WTC11 (cell line): ENCODE measurements at regions of chr13 and their contacts with region 1.

Region 1: GRCh38 chr13:29508130-29508875 is 87.2 kb downstream of the SLC7A1 start:
- DNase-seq: peak; percentile 90
- ATAC-seq: peak; percentile 80
- H3K4me3 Mint-ChIP-seq: no peak overlapping the region
- H3K27ac Mint-ChIP-seq: no peak overlapping the region
- H3K4me1 Mint-ChIP-seq: peaks cover 8% of the 10 kb centered on the region; the same call in 1 of the 2 replicates
- H3K27me3 Mint-ChIP-seq: no peaks in the 10 kb centered on the region
- CTCF ChIP-seq: peak; percentile 88

Region 2: GRCh38 chr13:29472332-29472961 is 35.9 kb before region 1 on chr13:
- CTCF ChIA-PET with region 1: interaction called, 10 read pairs
- POLR2A ChIA-PET with region 1: no interaction called
- DNase-seq: peak; percentile 68
- ATAC-seq: peak; percentile 76
- H3K4me3 Mint-ChIP-seq: no peak overlapping the region
- H3K27ac Mint-ChIP-seq: no peak overlapping the region
- H3K4me1 Mint-ChIP-seq: no peaks in the 10 kb centered on the region
- H3K27me3 Mint-ChIP-seq: no peaks in the 10 kb centered on the region; the same call in 1 of the 2 replicates
- CTCF ChIP-seq: peak; percentile 81

Region 3: GRCh38 chr13:29496240-29496712 is 12.0 kb before region 1 on chr13:
- CTCF ChIA-PET with region 1: interaction called, 31 read pairs
- POLR2A ChIA-PET with region 1: no interaction called
- DNase-seq: no peak
- ATAC-seq: no peak
- H3K4me3 Mint-ChIP-seq: no peak overlapping the region
- H3K27ac Mint-ChIP-seq: no peak overlapping the region
- H3K4me1 Mint-ChIP-seq: peaks cover 8% of the 10 kb centered on the region
- H3K27me3 Mint-ChIP-seq: no peaks in the 10 kb centered on the region
- CTCF ChIP-seq: no peak

Region 4: GRCh38 chr13:29548722-29549121 is 40.4 kb after region 1 on chr13:
- CTCF ChIA-PET with region 1: interaction called, 13 read pairs
- POLR2A ChIA-PET with region 1: no interaction called
- DNase-seq: no peak
- ATAC-seq: no peak
- H3K4me3 Mint-ChIP-seq: no peak overlapping the region
- H3K27ac Mint-ChIP-seq: peak overlapping the region; percentile 43; the same call in 1 of the 2 replicates
- H3K4me1 Mint-ChIP-seq: peaks cover 38% of the 10 kb centered on the region
- H3K27me3 Mint-ChIP-seq: no peaks in the 10 kb centered on the region
- CTCF ChIP-seq: no peak

Region 5: DNA sequence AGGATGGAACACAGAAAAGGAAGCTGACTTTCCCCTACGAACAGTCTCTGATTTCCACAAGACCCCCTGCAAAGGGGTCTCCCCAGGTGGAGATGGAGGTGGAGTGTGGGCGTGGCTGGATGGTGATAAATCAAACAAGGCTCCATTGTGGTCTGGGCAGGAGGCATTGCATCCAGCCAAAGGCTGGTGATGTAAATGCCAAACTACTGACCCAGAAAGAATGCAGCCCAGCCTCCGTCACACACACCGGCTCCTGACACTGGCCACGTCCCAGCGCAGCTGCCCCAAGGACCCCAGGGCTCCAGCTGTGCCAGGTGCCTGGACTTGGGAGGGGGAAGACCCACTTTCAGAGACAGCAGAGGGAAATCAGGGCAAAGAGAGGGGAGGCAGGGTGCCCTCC is 80.9 kb after region 1 on chr13:
- CTCF ChIA-PET with region 1: interaction called, 15 read pairs
- POLR2A ChIA-PET with region 1: no interaction called
- DNase-seq: no peak
- ATAC-seq: no peak
- H3K4me3 Mint-ChIP-seq: no peak overlapping the region
- H3K27ac Mint-ChIP-seq: peak overlapping the region; percentile 61; the same call in 1 of the 2 replicates
- H3K4me1 Mint-ChIP-seq: peaks cover 84% of the 10 kb centered on the region
- H3K27me3 Mint-ChIP-seq: no peaks in the 10 kb centered on the region
- CTCF ChIP-seq: no peak

Region 6: DNA sequence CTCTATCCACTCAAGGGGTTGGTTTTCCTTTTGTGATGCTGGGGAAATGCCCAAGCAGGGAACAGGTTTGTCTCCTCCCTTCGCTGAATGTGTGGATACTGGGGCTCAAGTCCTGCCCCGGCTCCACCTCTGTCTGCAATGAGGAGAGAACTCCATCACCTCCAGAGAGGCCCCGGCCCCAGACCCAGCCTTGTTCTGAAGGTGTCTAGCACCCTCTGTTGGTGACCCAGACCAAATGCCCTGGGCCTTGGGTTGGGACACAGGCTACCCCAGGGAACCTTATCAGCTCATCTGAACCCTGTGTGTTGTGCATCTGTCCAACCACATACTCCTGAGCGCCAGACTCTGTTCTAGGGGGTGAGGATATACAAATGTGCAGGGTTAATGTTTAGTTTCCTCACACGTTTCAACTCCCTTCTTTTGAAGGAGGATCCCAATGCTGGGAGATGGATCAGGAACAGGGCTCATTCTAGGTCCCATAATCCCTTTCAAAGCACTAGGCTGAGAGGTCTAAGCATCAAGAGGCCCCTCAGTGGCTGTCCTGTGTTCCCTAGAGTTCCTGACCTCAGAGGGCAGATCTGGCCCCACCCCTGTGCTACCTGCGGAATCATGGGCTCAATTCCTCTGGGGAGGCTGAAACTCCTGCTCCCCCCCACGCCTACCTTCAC is 199.7 kb after region 1 on chr13:
- CTCF ChIA-PET with region 1: interaction called, 66 read pairs
- POLR2A ChIA-PET with region 1: no interaction called
- DNase-seq: peak; percentile 81
- ATAC-seq: peak; percentile 97
- H3K4me3 Mint-ChIP-seq: no peak overlapping the region
- H3K27ac Mint-ChIP-seq: no peak overlapping the region
- H3K4me1 Mint-ChIP-seq: peaks cover 12% of the 10 kb centered on the region
- H3K27me3 Mint-ChIP-seq: no peaks in the 10 kb centered on the region; the same call in 1 of the 2 replicates
- CTCF ChIP-seq: peak; percentile 76